ENCODE measurements at regions of chr1 and their contacts with region 1.

Region 1: GRCh38 chr1:172002725-172003345 is 161.5 kb downstream of the DNM3 start:
- DNase-seq: peak; percentile 43
- H3K4me3 ChIP-seq: no peak overlapping the region
- H3K27ac ChIP-seq: no peak overlapping the region
- H3K27me3 ChIP-seq: no peaks in the 10 kb centered on the region
- CTCF ChIP-seq: peak; percentile 89

Region 2: GRCh38 chr1:171801487-171801891 is 201.3 kb before region 1 on chr1:
- CTCF ChIA-PET with region 1: interaction called, 12 read pairs
- POLR2A ChIA-PET with region 1: no interaction called
- DNase-seq: no peak
- H3K4me3 ChIP-seq: no peak overlapping the region
- H3K27ac ChIP-seq: no peak overlapping the region
- H3K27me3 ChIP-seq: no peaks in the 10 kb centered on the region
- CTCF ChIP-seq: peak; percentile 91

Region 3: GRCh38 chr1:172024516-172024915 is 21.7 kb after region 1 on chr1:
- CTCF ChIA-PET with region 1: interaction called, 18 read pairs
- POLR2A ChIA-PET with region 1: no interaction called
- DNase-seq: no peak
- H3K4me3 ChIP-seq: no peak overlapping the region
- H3K27ac ChIP-seq: no peak overlapping the region
- H3K27me3 ChIP-seq: no peaks in the 10 kb centered on the region
- CTCF ChIP-seq: no peak

Region 4: GRCh38 chr1:172135076-172135672 is 132.3 kb after region 1 on chr1:
- CTCF ChIA-PET with region 1: interaction called, 10 read pairs
- POLR2A ChIA-PET with region 1: no interaction called
- DNase-seq: no peak
- H3K4me3 ChIP-seq: no peak overlapping the region
- H3K27ac ChIP-seq: no peak overlapping the region
- H3K27me3 ChIP-seq: no peaks in the 10 kb centered on the region
- CTCF ChIP-seq: peak; percentile 40

Region 5: GRCh38 chr1:172279939-172280636 is 277.3 kb after region 1 on chr1:
- CTCF ChIA-PET with region 1: interaction called, 10 read pairs
- POLR2A ChIA-PET with region 1: no interaction called
- DNase-seq: no peak
- H3K4me3 ChIP-seq: no peak overlapping the region
- H3K27ac ChIP-seq: no peak overlapping the region
- H3K27me3 ChIP-seq: no peaks in the 10 kb centered on the region
- CTCF ChIP-seq: no peak

Region 6: DNA sequence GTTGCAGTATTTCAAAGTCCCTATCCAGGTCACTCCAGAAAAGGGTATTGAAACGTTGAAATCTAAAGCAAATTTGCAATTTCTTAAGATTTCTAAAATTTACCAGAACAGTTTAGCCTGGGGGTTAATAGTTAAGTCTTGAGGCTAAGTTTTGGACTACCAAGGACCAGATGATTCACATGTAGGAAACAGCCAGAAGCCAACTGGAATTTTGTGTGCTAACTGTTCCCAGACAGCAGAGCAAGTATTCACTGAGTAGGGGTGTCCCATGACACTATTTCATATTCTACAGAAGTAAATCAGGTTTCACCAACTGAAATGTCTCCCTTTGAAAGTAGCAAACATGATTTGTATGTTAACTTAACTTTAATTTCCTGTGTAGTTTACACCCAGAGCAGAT is 406.1 kb after region 1 on chr1:
- CTCF ChIA-PET with region 1: interaction called, 199 read pairs
- POLR2A ChIA-PET with region 1: no interaction called
- DNase-seq: no peak
- H3K4me3 ChIP-seq: no peak overlapping the region
- H3K27ac ChIP-seq: no peak overlapping the region
- H3K27me3 ChIP-seq: no peaks in the 10 kb centered on the region
- CTCF ChIP-seq: no peak

Region 7: DNA sequence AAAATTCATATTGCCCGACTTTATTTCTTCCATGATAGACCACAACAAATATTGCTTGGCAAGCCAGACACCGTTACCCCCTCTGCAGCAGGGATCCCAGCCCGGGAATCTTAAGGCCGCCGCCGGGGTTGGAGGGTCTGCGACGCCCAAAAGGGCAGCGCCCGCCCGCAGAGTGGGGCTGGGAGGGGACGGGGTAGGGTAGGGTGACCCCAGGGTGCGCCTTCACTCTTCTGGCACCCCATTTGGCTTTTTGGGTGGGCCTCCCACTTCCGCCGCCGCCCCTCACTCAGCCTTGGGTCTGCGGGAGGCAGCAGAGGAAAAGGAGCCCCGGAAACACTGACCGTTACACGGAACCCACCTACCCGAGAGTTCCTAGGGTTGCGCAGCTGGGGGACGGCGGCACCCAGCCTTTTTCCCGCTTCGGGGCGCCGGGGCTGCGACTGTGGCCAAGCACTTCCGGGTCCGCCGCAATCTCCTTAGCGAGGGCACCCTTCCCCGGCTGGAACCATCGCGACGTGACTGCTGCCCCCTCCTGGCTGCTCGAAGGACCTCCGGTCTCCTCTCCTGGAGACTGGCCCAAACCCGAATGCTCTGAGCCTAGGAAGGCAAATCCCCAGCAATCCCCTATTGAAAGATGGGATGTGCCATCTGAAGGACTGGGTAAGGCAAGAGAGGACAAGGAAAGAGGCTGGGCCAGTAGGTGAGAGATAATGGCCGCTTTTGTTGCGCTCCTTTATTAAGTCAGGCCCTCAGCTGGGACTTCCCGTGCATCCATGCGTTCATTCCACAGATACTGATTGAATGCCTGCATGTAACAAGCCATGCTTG is 441.0 kb after region 1 on chr1 and contains the start of gene PIGC:
- CTCF ChIA-PET with region 1: interaction called, 32 read pairs
- POLR2A ChIA-PET with region 1: no interaction called
- DNase-seq: peak; percentile 60
- H3K4me3 ChIP-seq: peak within 1 kb of the TSS; percentile 90
- H3K27ac ChIP-seq: peak within 1 kb of the TSS; percentile 75
- H3K27me3 ChIP-seq: peaks cover 2% of the 10 kb centered on the region
- CTCF ChIP-seq: peak; percentile 87
- polyA plus RNA-seq, gene PIGC: 22.7 and 25.2 TPM in 2 replicates

Measured in AG04450 (cell line).